Caco-2 (cell line): ENCODE measurements at regions of chr1 and their contacts with region 1.

Region 1: GRCh38 chr1:26417111-26417759 is 6.6 kb downstream of the LIN28A start:
- DNase-seq: peak; percentile 82 to 85
- H3K4me3 ChIP-seq: no peak overlapping the region
- H3K4me3 Mint-ChIP-seq: no peak overlapping the region
- H3K27ac Mint-ChIP-seq: peak overlapping the region; percentile 88
- H3K4me1 ChIP-seq: peaks cover 51% of the 10 kb centered on the region
- H3K4me1 Mint-ChIP-seq: peaks cover 22% of the 10 kb centered on the region
- H3K27me3 ChIP-seq: no peaks in the 10 kb centered on the region
- H3K27me3 Mint-ChIP-seq: no peaks in the 10 kb centered on the region
- CTCF ChIP-seq: peak; percentile 78 to 81

Region 2: DNA sequence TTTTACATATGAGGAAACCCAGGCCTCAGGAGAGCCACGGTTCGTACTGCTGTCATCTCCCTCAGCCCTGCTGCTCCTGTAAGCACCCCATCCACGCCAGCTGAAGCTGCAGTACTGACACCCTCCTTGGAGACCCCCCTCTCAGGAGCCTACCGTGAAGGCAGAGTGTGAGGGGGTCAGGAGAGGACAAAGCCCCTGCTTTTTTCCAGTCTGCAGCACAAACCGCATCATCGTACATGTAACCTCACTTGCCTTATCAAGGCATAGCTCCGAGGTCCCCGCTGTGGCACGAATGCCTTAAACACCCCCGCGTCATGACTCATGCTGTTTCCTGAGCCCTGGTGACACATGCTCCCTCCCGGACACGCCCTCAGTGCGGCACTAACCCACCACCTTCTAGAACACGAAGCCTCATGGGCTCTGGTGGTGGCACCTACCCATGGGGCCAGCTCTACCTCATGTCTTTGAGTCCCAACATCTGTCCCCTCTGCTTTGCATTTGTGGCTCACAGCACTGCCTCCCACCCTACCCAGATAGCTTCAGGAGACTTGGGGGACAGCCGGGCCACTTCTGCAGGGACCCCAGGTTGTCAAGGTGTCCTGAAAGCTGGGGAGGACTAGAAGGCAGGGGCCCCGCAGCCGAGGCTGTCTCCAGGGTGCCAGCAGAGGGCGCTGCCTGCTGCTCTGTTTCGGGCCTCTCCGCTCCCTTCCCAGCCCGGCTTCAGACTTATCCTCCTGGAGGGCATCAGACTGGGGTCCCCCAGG is 132.5 kb before region 1 on chr1:
- CTCF ChIA-PET with region 1: interaction called, 9 read pairs
- POLR2A ChIA-PET with region 1: no interaction called
- intact Hi-C with region 1: loop called (anchors 1 kb)
- DNase-seq: peak; percentile 67 to 74
- H3K4me3 ChIP-seq: no peak overlapping the region
- H3K4me3 Mint-ChIP-seq: no peak overlapping the region
- H3K27ac Mint-ChIP-seq: peak overlapping the region; percentile 51
- H3K4me1 ChIP-seq: peaks cover 13% of the 10 kb centered on the region
- H3K4me1 Mint-ChIP-seq: peaks cover 17% of the 10 kb centered on the region
- H3K27me3 ChIP-seq: no peaks in the 10 kb centered on the region
- H3K27me3 Mint-ChIP-seq: no peaks in the 10 kb centered on the region
- CTCF ChIP-seq: peak; percentile 58 to 79

Region 3: GRCh38 chr1:26378088-26378878 is 39.0 kb before region 1 on chr1:
- CTCF ChIA-PET with region 1: interaction called, 5 read pairs
- POLR2A ChIA-PET with region 1: interaction called, 14 read pairs
- intact Hi-C with region 1: no loop called
- DNase-seq: no peak
- H3K4me3 ChIP-seq: no peak overlapping the region
- H3K4me3 Mint-ChIP-seq: no peak overlapping the region
- H3K27ac Mint-ChIP-seq: no peak overlapping the region
- H3K4me1 ChIP-seq: no peaks in the 10 kb centered on the region; the same call in 1 of the 2 replicates
- H3K4me1 Mint-ChIP-seq: peaks cover 6% of the 10 kb centered on the region
- H3K27me3 ChIP-seq: no peaks in the 10 kb centered on the region
- H3K27me3 Mint-ChIP-seq: no peaks in the 10 kb centered on the region
- CTCF ChIP-seq: no peak

Region 4: GRCh38 chr1:26391450-26391849 is 25.8 kb before region 1 on chr1:
- CTCF ChIA-PET with region 1: interaction called, 16 read pairs
- POLR2A ChIA-PET with region 1: no interaction called
- intact Hi-C with region 1: no loop called
- DNase-seq: peak in 1 of 2 experiments; percentile 55
- H3K4me3 ChIP-seq: no peak overlapping the region
- H3K4me3 Mint-ChIP-seq: no peak overlapping the region
- H3K27ac Mint-ChIP-seq: no peak overlapping the region
- H3K4me1 ChIP-seq: no peaks in the 10 kb centered on the region; the same call in 1 of the 2 replicates
- H3K4me1 Mint-ChIP-seq: peaks cover 7% of the 10 kb centered on the region
- H3K27me3 ChIP-seq: no peaks in the 10 kb centered on the region
- H3K27me3 Mint-ChIP-seq: no peaks in the 10 kb centered on the region
- CTCF ChIP-seq: peak; percentile 63 to 84

Region 5: GRCh38 chr1:26431979-26432695 is 14.9 kb after region 1 on chr1 and contains the start of gene DHDDS:
- CTCF ChIA-PET with region 1: interaction called, 9 read pairs
- POLR2A ChIA-PET with region 1: interaction called, 10 read pairs
- intact Hi-C with region 1: loop called (anchors 1 kb)
- DNase-seq: peak; percentile 97
- H3K4me3 ChIP-seq: peak within 1 kb of the TSS; percentile 78
- H3K4me3 Mint-ChIP-seq: peak within 1 kb of the TSS; percentile 95
- H3K27ac Mint-ChIP-seq: peak within 1 kb of the TSS; percentile 94
- H3K4me1 ChIP-seq: peaks cover 6% of the 10 kb centered on the region
- H3K4me1 Mint-ChIP-seq: no peaks in the 10 kb centered on the region
- H3K27me3 ChIP-seq: no peaks in the 10 kb centered on the region
- H3K27me3 Mint-ChIP-seq: no peaks in the 10 kb centered on the region
- CTCF ChIP-seq: no peak
- total RNA-seq, gene DHDDS: 46.9 and 55.6 TPM in 2 replicates